ENCODE measurements at regions of chr11 and their contacts with region 1.

Region 1: DNA sequence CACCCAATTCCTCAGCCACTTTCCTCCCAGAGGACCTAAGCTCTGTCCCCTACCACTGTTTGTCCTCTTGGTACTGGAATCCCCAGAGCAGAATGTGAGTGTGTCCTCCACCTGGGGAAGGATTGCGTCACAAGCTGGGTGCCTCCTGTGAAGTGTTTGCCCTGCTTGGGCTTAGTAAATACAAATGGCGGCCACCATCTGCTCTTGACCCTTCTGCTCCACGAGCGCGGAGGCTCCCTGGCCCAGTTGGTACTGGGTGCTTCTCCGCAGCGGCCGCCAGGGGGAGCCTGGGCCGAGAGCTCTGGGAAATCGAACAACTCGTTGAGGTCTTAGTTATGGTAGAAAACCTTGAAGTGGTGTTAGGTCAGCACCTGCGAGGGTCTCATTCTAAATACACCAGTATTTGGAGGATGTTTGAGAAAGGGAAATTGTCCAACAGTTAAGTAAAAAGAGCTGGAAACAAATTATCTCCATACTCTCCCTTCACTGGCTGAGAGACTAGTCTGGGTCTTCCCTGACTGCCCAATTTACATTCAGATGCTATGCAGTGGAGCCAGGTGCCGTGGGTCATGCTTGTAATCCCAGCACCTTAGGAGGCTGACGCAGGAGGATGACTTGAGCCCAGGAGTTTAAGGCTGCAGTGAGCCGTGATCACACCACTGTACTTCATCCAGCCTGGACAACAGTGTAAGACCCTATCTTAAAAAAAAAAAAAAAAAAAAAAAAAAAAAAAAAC is 74.6 kb upstream of the TEAD1 start:
- DNase-seq: peak; percentile 81
- ATAC-seq: peak; percentile 46

Region 2: DNA sequence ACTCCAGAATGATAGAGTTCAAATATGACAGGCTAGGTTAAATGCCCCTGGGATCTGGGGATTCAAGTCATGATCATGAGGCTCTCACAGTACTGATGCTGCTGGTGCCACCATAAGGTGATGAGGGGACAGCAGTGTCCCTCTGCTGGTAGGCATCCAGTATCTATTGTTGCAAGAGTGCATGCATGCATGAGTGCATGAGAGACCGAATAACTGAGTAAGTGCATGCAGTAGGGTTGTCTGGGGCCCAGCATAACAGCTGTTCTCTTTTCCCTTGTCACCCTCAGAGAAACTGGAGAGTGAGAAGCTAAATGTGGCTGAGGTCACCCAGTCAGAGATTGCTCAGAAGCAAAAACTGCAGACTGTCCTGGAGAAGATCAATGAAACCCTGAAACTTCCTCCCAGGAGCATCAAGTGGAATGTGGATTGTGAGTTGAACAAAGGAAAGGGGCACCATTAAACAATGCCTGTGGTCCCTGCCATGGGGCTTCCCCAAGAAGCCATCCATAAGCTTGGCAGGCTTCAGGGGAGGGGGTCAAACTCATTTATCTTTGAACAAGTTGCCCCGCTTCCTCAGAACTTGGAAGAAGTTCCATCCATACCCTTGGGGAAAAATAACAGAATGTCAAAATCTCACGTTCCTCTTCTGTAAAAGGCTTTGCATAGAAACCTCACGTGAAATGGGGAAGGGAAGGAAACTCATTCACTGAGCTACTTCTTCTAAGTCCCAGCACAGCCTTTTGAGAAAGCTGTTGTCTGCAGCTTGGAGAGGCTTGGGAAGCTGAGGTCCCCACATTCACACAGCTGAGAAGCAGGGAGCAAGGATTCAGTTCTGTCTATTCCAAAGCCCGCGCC is 103.2 kb before region 1 on chr11:
- intact Hi-C with region 1: loop called (anchors 5 kb)
- DNase-seq: no peak
- ATAC-seq: no peak

Measured in Right ventricle myocardium inferior (tissue), 1 donor.